Aorta (tissue), 5 donors: ENCODE measurements at regions of chr6 and their contacts with region 1.

Region 1: DNA sequence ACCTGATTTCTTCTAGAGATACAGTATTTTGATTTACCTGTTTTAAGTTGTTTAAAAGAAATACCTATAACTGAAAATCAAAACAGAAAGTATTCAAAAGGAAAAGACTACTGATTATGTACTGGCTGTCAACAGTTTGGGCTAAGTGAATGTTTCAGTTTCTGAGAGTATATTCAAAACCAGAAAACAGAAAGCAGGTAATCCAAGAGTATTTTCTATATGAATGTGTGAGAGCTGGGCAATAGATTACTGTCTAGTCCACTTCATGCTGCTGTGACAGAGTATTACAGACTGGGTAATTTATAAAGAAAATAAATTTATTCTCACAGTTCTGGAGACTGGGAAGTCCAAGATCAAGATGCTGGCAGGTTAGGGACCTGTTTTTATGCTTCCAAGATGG is 261.0 kb downstream of the ARHGAP18 start:
- DNase-seq: no peak
- ATAC-seq: no peak
- H3K4me3 ChIP-seq: no peak overlapping the region
- H3K27ac ChIP-seq: no peak overlapping the region
- H3K4me1 ChIP-seq: no peaks in the 10 kb centered on the region
- H3K27me3 ChIP-seq: no peaks in the 10 kb centered on the region

Region 2: DNA sequence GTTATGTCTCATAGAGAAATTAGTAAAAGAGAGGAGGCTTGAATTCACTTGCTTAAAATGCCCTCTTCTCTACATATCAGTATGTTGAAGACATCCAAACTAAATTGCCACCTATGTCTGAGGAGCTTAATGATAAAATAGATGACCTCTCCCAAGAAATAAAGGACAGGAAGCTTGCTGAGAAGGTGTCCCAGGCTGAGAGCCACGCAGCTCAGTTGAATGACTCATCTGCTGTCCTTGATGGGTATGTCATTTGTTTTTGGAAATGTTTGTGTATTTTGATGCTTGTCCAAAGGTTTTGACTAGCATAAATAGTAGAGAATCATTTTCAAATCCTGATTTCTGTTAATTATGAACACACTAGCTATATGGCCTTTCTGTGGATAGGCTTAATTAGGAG is 46.7 kb before region 1 on chr6:
- intact Hi-C with region 1: loop called in 1 of 2 experiments (anchors 5 kb)
- DNase-seq: no peak
- ATAC-seq: no peak
- H3K4me3 ChIP-seq: no peak overlapping the region
- H3K27ac ChIP-seq: no peak overlapping the region
- H3K4me1 ChIP-seq: no peaks in the 10 kb centered on the region
- H3K27me3 ChIP-seq: no peaks in the 10 kb centered on the region

Region 3: GRCh38 chr6:129416337-129416990 is 32.5 kb before region 1 on chr6:
- intact Hi-C with region 1: no loop called
- DNase-seq: peak in 1 of 2 donors; percentile 32
- ATAC-seq: peak; percentile 33
- H3K4me3 ChIP-seq: no peak overlapping the region
- H3K27ac ChIP-seq: no peak overlapping the region
- H3K4me1 ChIP-seq: no peaks in the 10 kb centered on the region
- H3K27me3 ChIP-seq: no peaks in the 10 kb centered on the region

Region 4: GRCh38 chr6:129469070-129469662 is 20.2 kb after region 1 on chr6:
- intact Hi-C with region 1: no loop called
- DNase-seq: no peak
- ATAC-seq: no peak
- H3K4me3 ChIP-seq: no peak overlapping the region
- H3K27ac ChIP-seq: no peak overlapping the region
- H3K4me1 ChIP-seq: no peaks in the 10 kb centered on the region
- H3K27me3 ChIP-seq: no peaks in the 10 kb centered on the region

Region 5: GRCh38 chr6:129490521-129491245 is 41.7 kb after region 1 on chr6:
- intact Hi-C with region 1: no loop called
- DNase-seq: peak in 1 of 2 donors; percentile 50
- ATAC-seq: peak; percentile 92
- H3K4me3 ChIP-seq: peak overlapping the region in 1 of 2 donors; percentile 16
- H3K27ac ChIP-seq: peak overlapping the region; percentile 61 to 74
- H3K4me1 ChIP-seq: peaks cover 0 to 2% of the 10 kb centered on the region in 2 donors
- H3K27me3 ChIP-seq: no peaks in the 10 kb centered on the region